ENCODE measurements at regions of chr4 and their contacts with region 1.

Region 1: GRCh38 chr4:76305971-76306881 is at the start of gene STBD1:
- DNase-seq: peak; percentile 55
- H3K4me3 Mint-ChIP-seq: peak within 1 kb of the TSS; percentile 78
- H3K27ac Mint-ChIP-seq: peak within 1 kb of the TSS; percentile 84
- H3K4me1 Mint-ChIP-seq: peaks cover 49% of the 10 kb centered on the region
- H3K27me3 Mint-ChIP-seq: no peaks in the 10 kb centered on the region
- total RNA-seq, gene STBD1: 5.5 to 5.8 TPM

Region 2: DNA sequence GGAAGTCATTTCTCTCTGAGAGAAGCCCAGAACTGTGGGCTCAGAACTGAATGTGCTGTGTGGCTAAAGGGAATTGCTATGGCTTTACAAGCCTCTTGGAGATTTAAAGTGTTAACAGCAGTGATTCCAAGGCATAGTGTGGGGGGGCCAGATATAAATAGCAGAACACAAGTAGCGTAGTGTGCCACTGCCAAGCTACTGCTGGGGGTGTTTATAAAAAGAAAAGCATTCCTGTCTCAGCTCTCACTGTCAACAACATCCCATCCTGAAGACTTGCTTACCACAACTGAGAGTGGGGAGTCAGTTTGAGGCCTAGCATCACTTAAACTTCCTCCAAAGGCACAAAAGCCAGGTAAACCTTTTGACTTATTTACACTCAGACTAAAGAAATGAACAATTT is 231.8 kb before region 1 on chr4 and contains the start of gene ART3:
- CTCF ChIA-PET with region 1: no interaction called
- POLR2A ChIA-PET with region 1: no interaction called
- DNase-seq: no peak
- H3K4me3 Mint-ChIP-seq: no peak within 1 kb of the TSS
- H3K27ac Mint-ChIP-seq: no peak within 1 kb of the TSS
- H3K4me1 Mint-ChIP-seq: peaks cover 1% of the 10 kb centered on the region
- H3K27me3 Mint-ChIP-seq: peaks cover 3% of the 10 kb centered on the region
- total RNA-seq, gene ART3: 0.30 to 0.95 TPM

Region 3: GRCh38 chr4:76108467-76109181 is 197.6 kb before region 1 on chr4:
- CTCF ChIA-PET with region 1: no interaction called
- POLR2A ChIA-PET with region 1: no interaction called
- DNase-seq: no peak
- H3K4me3 Mint-ChIP-seq: no peak overlapping the region
- H3K27ac Mint-ChIP-seq: no peak overlapping the region
- H3K4me1 Mint-ChIP-seq: no peaks in the 10 kb centered on the region
- H3K27me3 Mint-ChIP-seq: no peaks in the 10 kb centered on the region

Region 4: GRCh38 chr4:76354517-76355473 is 48.6 kb after region 1 on chr4:
- CTCF ChIA-PET with region 1: interaction called, 10 read pairs
- POLR2A ChIA-PET with region 1: interaction called, 7 read pairs
- DNase-seq: peak; percentile 66
- H3K4me3 Mint-ChIP-seq: peak overlapping the region; percentile 5
- H3K27ac Mint-ChIP-seq: peak overlapping the region; percentile 10
- H3K4me1 Mint-ChIP-seq: peaks cover 22% of the 10 kb centered on the region
- H3K27me3 Mint-ChIP-seq: peaks cover 15% of the 10 kb centered on the region

Region 5: GRCh38 chr4:76384052-76384451 is 77.8 kb after region 1 on chr4:
- CTCF ChIA-PET with region 1: no interaction called
- POLR2A ChIA-PET with region 1: no interaction called
- DNase-seq: no peak
- H3K4me3 Mint-ChIP-seq: no peak overlapping the region
- H3K27ac Mint-ChIP-seq: no peak overlapping the region
- H3K4me1 Mint-ChIP-seq: no peaks in the 10 kb centered on the region
- H3K27me3 Mint-ChIP-seq: peaks cover 22% of the 10 kb centered on the region

Measured in activated CD4-positive, alpha-beta memory T cell treated with anti-CD3 and anti-CD28 coated beads, Interleukin-2, amount 10 ng/mL, durations not matched to agents 7 days and 5 days (primary cell).